GM10248 (cell line): ENCODE measurements at regions of chr19 and their contacts with region 1.

Region 1: DNA sequence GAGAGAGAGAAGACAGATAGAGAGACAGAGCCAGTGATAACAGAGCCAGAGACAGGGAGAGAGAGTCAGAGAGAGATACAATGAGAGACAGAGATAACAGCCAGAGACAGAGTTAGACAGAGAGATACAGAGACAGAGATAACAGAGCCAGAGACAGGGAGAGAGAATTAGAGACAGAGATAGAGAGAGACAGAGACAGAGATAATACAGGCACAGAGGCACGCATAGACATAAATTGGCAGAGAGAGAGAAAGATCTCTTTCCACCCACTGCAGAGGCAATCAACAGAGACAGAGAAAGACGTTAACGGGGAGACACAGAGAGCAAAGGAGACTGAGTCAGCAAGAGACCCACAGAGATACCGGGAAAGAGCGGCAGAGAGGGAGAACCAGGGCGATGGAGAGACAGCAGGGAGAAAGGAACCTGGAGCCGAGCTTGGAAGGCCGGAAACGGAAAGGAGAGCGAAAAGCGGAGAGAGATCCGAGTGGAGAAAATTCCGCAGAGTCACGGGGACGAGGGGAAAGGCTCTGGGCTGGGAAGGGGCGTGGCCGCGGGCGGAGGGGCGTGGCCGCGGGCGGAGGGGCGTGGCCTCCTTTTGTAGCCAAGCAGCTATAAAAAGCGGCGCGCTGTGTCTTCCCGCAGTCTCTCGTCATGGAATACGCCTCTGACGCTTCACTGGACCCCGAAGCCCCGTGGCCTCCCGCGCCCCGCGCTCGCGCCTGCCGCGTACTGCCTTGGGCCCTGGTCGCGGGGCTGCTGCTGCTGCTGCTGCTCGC is at the start of gene TNFSF9:
- DNase-seq: peak; percentile 85
- CTCF ChIP-seq: no peak

Region 2: GRCh38 chr19:6516659-6517291 is 13.8 kb before region 1 on chr19:
- CTCF ChIA-PET with region 1: interaction called, 15 read pairs
- POLR2A ChIA-PET with region 1: interaction called, 34 read pairs
- DNase-seq: peak; percentile 85
- CTCF ChIP-seq: peak; percentile 98

Region 3: DNA sequence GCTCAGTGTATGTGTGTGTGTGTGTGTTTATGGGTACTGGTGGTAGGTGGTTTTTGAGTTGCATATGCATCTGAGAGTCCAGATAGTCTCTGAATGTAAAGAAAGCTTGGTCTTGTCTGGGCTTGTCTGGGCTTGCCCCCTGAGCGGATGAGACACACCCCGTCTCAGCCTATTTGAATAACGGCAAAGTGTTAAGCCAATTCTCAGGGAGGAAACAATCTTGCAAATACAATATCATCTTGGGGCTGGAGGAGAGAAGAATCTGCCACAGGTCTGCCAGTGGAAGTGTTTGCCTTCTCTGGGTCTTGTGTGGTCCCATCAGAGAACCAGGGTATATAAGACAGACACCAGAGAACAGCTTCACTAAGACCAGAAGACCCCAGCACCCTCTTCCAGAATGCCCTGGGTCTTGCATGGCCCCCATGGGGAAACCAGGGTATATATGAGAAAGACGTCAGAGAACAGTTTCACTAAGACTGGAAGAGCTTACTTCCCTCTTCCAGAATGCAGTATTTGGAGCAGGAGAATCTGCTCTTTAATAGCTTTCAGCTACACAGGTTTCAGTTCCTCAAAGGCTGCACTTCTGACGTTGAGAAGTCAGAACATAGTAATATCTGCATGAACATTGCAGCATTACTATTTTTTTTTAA is 47.0 kb after region 1 on chr19:
- CTCF ChIA-PET with region 1: no interaction called
- POLR2A ChIA-PET with region 1: interaction called, 14 read pairs
- DNase-seq: peak; percentile 72
- CTCF ChIP-seq: no peak

Region 4: DNA sequence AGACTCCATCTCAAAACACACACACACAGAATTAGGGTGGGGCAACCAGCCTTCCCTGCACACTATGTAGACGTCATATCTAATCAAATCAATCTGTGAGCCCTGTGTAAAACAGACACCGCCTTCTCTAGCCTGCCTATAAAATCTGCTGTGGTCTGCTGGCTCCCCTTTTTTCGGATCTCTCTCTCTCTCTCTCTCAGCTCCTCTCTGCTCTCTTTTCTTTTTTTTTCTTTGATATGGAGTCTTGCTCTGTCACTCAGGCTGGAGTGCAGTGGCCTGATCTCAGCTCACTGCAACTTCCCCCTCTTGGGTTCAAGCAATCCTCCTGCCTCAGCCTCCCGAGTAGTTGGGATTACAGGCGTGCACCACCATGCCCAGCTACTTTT is 72.1 kb after region 1 on chr19:
- CTCF ChIA-PET with region 1: no interaction called
- POLR2A ChIA-PET with region 1: interaction called, 10 read pairs
- DNase-seq: no peak
- CTCF ChIP-seq: no peak